Mammary epithelial cell (primary cell): ENCODE measurements at regions of chr5 and their contacts with region 1.

Region 1: DNA sequence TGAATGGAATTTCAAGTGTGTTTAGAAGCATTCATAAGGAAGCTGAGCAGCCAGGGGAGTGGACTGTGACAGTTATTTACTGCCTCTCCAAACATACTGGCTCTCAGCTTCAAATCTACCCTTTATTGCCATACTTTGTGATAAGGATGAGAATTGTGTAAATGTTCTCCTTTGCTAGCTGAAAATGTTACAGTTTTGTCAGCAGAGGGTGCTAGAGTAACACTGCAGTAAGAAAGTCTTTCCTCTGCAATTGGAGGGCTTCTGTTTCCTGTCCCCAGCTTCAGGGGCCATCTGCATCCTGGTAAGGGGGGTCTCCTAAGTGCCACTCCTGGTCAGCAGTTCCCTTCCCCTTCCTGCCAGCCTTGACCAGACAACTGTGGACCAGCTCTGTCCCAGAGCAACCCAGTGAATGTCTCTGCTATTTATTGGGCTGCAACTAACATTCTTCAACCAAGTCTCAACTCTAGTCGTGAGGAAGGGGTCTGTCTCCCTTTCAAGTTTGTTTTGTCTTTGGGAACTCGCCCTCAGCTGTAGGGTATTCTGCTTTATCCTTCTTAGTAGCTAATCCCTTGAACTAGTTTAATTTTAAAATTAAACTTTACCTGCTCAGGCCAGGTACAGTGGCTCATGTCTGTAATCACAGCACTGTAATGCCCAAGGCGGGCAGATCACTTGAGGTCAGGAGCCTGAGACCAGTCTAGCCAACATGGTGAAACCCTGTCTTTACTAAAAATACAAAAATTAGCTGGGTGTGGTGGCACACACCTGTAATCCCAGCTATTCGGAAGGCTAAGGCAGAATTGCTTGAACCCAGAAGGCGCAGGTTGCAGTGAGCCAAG is 45.3 kb downstream of the RAPGEF6 start:
- DNase-seq: peak; percentile 10
- H3K4me3 ChIP-seq: no peak overlapping the region
- H3K27ac ChIP-seq: no peak overlapping the region
- H3K4me1 ChIP-seq: peaks cover 11% of the 10 kb centered on the region
- H3K27me3 ChIP-seq: no peaks in the 10 kb centered on the region
- CTCF ChIP-seq: peak; percentile 80 to 86

Region 2: DNA sequence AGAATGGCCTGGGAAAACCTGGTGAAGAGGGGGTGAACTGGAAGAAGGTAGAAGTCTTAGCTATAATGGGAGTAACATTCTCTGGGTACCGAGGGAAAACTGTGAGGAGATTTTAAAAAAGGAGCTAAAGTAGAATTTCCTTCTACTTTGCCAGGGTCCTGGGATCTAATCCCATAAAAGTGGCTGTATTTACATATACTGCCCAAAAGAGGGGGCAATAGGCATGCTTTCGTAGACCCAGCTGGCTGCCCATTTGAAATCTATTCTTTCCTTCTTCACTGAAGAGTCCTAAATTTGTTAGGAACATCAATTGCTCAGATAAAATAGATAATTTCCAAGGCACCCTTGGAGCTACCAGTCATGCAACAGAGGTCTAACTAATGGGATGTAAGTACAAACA is 166.7 kb before region 1 on chr5:
- CTCF ChIA-PET with region 1: no interaction called
- dilution Hi-C with region 1: no loop called
- in situ Hi-C with region 1: no loop called
- intact Hi-C with region 1: loop called (anchors 2 kb)
- DNase-seq: no peak
- H3K4me3 ChIP-seq: no peak overlapping the region
- H3K27ac ChIP-seq: no peak overlapping the region
- H3K4me1 ChIP-seq: no peaks in the 10 kb centered on the region
- H3K27me3 ChIP-seq: no peaks in the 10 kb centered on the region
- CTCF ChIP-seq: peak; percentile 26 to 33

Region 3: GRCh38 chr5:131634996-131635754 is 45.4 kb after region 1 on chr5 and contains the start of gene RAPGEF6:
- CTCF ChIA-PET with region 1: interaction called, 4 read pairs
- dilution Hi-C with region 1: no loop called
- in situ Hi-C with region 1: no loop called
- intact Hi-C with region 1: loop called (anchors 1 kb)
- DNase-seq: peak; percentile 100
- H3K4me3 ChIP-seq: peak within 1 kb of the TSS; percentile 77 to 88 (median 83)
- H3K27ac ChIP-seq: peak within 1 kb of the TSS; percentile 97
- H3K4me1 ChIP-seq: peaks cover 24% of the 10 kb centered on the region
- H3K27me3 ChIP-seq: no peaks in the 10 kb centered on the region
- CTCF ChIP-seq: no peak
- total RNA-seq, gene RAPGEF6: 14.4 to 14.8 TPM

Region 4: GRCh38 chr5:131679913-131680312 is 90.2 kb after region 1 on chr5:
- CTCF ChIA-PET with region 1: no interaction called
- dilution Hi-C with region 1: no loop called
- in situ Hi-C with region 1: no loop called
- intact Hi-C with region 1: loop called (anchors 10 kb)
- DNase-seq: peak; percentile 73
- H3K4me3 ChIP-seq: no peak overlapping the region
- H3K27ac ChIP-seq: no peak overlapping the region
- H3K4me1 ChIP-seq: peaks cover 7% of the 10 kb centered on the region
- H3K27me3 ChIP-seq: no peaks in the 10 kb centered on the region
- CTCF ChIP-seq: no peak

Region 5: DNA sequence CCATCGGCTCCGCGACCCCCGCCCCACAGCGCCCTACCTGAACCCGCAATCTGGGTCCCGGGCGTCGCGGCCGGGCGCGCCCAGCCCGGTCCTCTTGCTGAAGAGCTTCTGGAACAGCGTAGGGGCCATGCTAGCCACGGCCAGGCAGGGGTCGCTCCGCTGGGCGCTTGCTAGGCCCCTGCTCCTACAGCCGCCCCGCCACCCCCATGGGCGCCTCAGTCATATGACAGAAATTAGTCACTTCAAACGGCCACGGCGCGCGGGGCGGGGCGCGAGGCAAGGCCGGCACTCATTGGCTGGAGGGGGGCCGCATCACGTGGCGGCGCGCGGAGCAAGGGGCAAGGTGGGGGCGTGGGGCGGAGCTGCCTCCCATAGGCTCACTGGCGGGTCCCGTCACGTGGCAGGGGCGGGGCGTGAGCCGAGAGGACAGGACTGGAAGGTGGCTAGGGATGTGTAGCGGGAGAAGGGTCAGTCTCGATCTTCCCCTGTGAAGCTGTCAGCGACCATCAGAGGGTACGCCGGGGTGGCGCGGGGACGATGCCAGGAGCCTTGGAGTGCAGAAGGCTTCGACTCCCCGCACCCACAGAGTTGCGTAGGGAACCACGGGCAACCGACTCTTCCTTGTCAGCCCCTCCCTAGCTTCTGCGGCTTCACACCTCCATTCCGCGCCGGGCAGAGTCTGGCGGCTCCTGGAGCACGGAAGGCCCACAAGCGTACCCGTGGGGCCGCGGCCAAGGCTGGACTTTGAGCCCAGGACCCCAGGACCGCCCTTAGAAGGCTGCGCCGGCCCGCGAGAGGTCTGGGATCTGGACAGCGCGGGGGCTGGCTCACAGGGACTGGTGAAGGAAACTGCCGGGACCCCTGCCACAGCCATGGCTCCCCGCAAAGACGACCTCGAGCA is 207.3 kb after region 1 on chr5 and contains the start of gene FNIP1:
- CTCF ChIA-PET with region 1: no interaction called
- dilution Hi-C with region 1: no loop called
- in situ Hi-C with region 1: no loop called
- intact Hi-C with region 1: loop called (anchors 1 kb)
- DNase-seq: peak; percentile 97
- H3K4me3 ChIP-seq: peak within 1 kb of the TSS; percentile 93 to 97 (median 94)
- H3K27ac ChIP-seq: peak within 1 kb of the TSS; percentile 91
- H3K4me1 ChIP-seq: peaks cover 13% of the 10 kb centered on the region
- H3K27me3 ChIP-seq: no peaks in the 10 kb centered on the region
- CTCF ChIP-seq: no peak
- total RNA-seq, gene FNIP1: 27.3 to 69.2 TPM

Region 6: GRCh38 chr5:132007399-132008165 is 417.9 kb after region 1 on chr5:
- CTCF ChIA-PET with region 1: interaction called, 8 read pairs
- dilution Hi-C with region 1: no loop called
- in situ Hi-C with region 1: loop called in 1 of 2 experiments (anchors 10 kb)
- intact Hi-C with region 1: loop called (anchors 1 kb)
- DNase-seq: peak; percentile 71
- H3K4me3 ChIP-seq: no peak overlapping the region
- H3K27ac ChIP-seq: no peak overlapping the region
- H3K4me1 ChIP-seq: peaks cover 17% of the 10 kb centered on the region
- H3K27me3 ChIP-seq: peaks cover 7% of the 10 kb centered on the region
- CTCF ChIP-seq: peak; percentile 71 to 80

Region 7: GRCh38 chr5:132114150-132115121 is 524.7 kb after region 1 on chr5:
- CTCF ChIA-PET with region 1: no interaction called
- dilution Hi-C with region 1: no loop called
- in situ Hi-C with region 1: no loop called
- intact Hi-C with region 1: no loop called
- DNase-seq: no peak
- H3K4me3 ChIP-seq: no peak overlapping the region
- H3K27ac ChIP-seq: no peak overlapping the region
- H3K4me1 ChIP-seq: no peaks in the 10 kb centered on the region
- H3K27me3 ChIP-seq: no peaks in the 10 kb centered on the region
- CTCF ChIP-seq: no peak

Region 8: DNA sequence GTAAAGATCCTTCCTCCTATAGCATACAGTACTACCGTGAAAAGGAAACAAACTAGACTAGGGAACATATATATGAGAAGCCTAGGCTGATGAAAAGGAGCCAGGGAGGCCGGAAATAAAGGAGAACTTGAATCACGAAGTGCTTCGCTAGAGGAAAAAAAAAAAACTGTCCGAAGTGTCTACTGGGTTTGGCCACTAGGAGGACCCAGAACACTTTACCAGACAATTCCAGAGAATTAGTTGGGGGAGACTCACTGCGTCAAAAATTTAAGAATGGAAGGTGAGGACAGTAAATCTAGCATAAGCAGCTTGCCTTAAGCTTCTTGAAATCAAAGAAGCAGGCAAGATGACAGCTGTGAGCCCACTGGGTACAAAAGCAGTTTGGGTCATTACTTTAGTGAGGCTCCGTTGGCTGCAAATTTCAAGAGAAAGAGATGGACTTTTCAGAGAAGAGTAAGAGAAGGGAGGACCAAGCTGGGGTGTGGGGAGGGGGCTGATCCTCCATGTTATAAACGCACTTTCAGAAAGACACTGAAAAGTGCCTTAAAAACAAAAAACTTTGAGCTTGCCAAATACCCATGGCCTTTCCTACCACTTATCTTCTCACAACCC is 590.5 kb after region 1 on chr5:
- CTCF ChIA-PET with region 1: no interaction called
- dilution Hi-C with region 1: no loop called
- in situ Hi-C with region 1: no loop called
- intact Hi-C with region 1: loop called (anchors 10 kb)
- DNase-seq: peak; percentile 63
- H3K4me3 ChIP-seq: no peak overlapping the region
- H3K27ac ChIP-seq: no peak overlapping the region
- H3K4me1 ChIP-seq: peaks cover 22% of the 10 kb centered on the region
- H3K27me3 ChIP-seq: no peaks in the 10 kb centered on the region
- CTCF ChIP-seq: peak; percentile 79 to 87